Endothelial cell of umbilical vein (primary cell): ENCODE measurements at regions of chr1 and their contacts with region 1.

Region 1: GRCh38 chr1:164588516-164589341 is 29.7 kb downstream of the PBX1 start:
- DNase-seq: peak; percentile 77
- H3K4me3 ChIP-seq: peak overlapping the region in 1 of 3 experiments; percentile 16
- H3K27ac ChIP-seq: no peak overlapping the region
- H3K4me1 ChIP-seq: no peaks in the 10 kb centered on the region
- H3K27me3 ChIP-seq: no peaks in the 10 kb centered on the region
- CTCF ChIP-seq: no peak
- POLR2A ChIP-seq: no peak

Region 2: DNA sequence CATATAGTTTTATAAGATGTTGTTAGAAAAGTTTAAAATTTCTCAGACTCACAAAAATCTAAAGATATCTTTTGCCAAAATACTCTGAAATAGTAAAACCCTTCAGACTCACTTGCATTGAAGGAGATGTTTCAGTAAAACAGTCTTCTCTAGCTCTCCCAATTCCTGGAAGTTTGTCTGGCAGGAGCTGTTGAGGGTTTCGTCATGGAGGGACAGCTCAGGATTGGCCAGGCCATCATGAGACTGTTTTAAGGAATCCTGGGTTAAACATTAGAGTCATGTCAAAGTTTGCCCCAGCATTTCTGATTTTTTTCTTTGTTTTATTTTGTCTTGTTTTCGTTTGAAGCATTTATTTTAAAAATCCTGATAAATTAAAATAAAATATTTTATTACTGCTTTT is 323.5 kb before region 1 on chr1:
- CTCF ChIA-PET with region 1: no interaction called
- POLR2A ChIA-PET with region 1: interaction called, 10 read pairs
- dilution Hi-C with region 1: no loop called
- intact Hi-C with region 1: no loop called
- DNase-seq: no peak
- H3K4me3 ChIP-seq: no peak overlapping the region
- H3K27ac ChIP-seq: no peak overlapping the region
- H3K4me1 ChIP-seq: no peaks in the 10 kb centered on the region
- H3K27me3 ChIP-seq: no peaks in the 10 kb centered on the region
- CTCF ChIP-seq: no peak
- POLR2A ChIP-seq: no peak

Region 3: GRCh38 chr1:164563721-164564360 is 24.9 kb before region 1 on chr1:
- CTCF ChIA-PET with region 1: no interaction called
- POLR2A ChIA-PET with region 1: interaction called, 3 read pairs
- dilution Hi-C with region 1: no loop called
- intact Hi-C with region 1: loop called (anchors 1 kb)
- DNase-seq: peak; percentile 23
- H3K4me3 ChIP-seq: peak overlapping the region; percentile 7 to 99 (median 59)
- H3K27ac ChIP-seq: no peak overlapping the region
- H3K4me1 ChIP-seq: peaks cover 36% of the 10 kb centered on the region
- H3K27me3 ChIP-seq: no peaks in the 10 kb centered on the region
- CTCF ChIP-seq: no peak
- POLR2A ChIP-seq: no peak